Naive thymus-derived CD4-positive, alpha-beta T cell (primary cell): ENCODE measurements at regions of chr2 and their contacts with region 1.

Region 1: DNA sequence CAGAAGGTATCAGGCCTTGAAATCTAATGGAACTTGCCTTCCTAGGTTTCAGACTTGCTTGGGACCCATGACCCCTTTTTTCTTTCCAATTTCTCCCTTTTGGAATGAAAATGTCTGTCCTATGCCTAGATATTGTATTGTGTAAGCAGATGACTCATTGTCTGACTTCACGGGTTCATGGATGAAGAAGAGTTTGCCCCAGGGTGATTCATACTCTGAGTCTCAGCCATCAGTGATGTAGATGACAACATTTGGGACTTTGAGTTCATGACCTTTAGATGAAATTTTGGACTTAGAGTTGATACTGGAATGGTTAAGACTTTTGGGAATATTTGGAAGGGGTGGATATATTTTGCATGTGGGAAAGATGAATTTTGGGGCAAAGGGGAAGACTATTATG is 11.2 kb upstream of the SCYGR5 start:
- DNase-seq: no peak
- ATAC-seq: no peak
- H3K4me3 ChIP-seq: no peak overlapping the region
- H3K4me3 Mint-ChIP-seq: no peak overlapping the region
- H3K27ac ChIP-seq: no peak overlapping the region
- H3K27ac Mint-ChIP-seq: no peak overlapping the region
- H3K4me1 ChIP-seq: no peaks in the 10 kb centered on the region
- H3K4me1 Mint-ChIP-seq: no peaks in the 10 kb centered on the region
- H3K27me3 ChIP-seq: no peaks in the 10 kb centered on the region
- H3K27me3 Mint-ChIP-seq: peaks cover 0 to 12% (median 4%) of the 10 kb centered on the region in 5 donors

Region 2: GRCh38 chr2:227479865-227480475 is 175.5 kb before region 1 on chr2:
- CTCF ChIA-PET with region 1: no interaction called
- POLR2A ChIA-PET with region 1: no interaction called
- intact Hi-C with region 1: loop called in 1 of 2 experiments (anchors 5 kb)
- DNase-seq: peak in 2 of 9 donors; percentile 12 to 14
- ATAC-seq: peak; percentile 71
- H3K4me3 ChIP-seq: no peak overlapping the region
- H3K4me3 Mint-ChIP-seq: peak overlapping the region in 8 of 10 donors; percentile 7 to 59 (median 32)
- H3K27ac ChIP-seq: peak overlapping the region; percentile 2
- H3K27ac Mint-ChIP-seq: peak overlapping the region; percentile 0 to 85 (median 26)
- H3K4me1 ChIP-seq: peaks cover 28 to 31% of the 10 kb centered on the region in 2 donors
- H3K4me1 Mint-ChIP-seq: peaks cover 44 to 98% (median 68%) of the 10 kb centered on the region in 7 donors
- H3K27me3 ChIP-seq: no peaks in the 10 kb centered on the region
- H3K27me3 Mint-ChIP-seq: no peaks in the 10 kb centered on the region

Region 3: GRCh38 chr2:227862227-227862740 is 206.8 kb after region 1 on chr2:
- CTCF ChIA-PET with region 1: interaction called, 7 read pairs
- POLR2A ChIA-PET with region 1: no interaction called
- intact Hi-C with region 1: loop called (anchors 1 to 2 kb)
- DNase-seq: no peak
- ATAC-seq: peak; percentile 48
- H3K4me3 ChIP-seq: no peak overlapping the region
- H3K4me3 Mint-ChIP-seq: no peak overlapping the region
- H3K27ac ChIP-seq: no peak overlapping the region
- H3K27ac Mint-ChIP-seq: no peak overlapping the region
- H3K4me1 ChIP-seq: no peaks in the 10 kb centered on the region
- H3K4me1 Mint-ChIP-seq: no peaks in the 10 kb centered on the region
- H3K27me3 ChIP-seq: no peaks in the 10 kb centered on the region
- H3K27me3 Mint-ChIP-seq: peaks cover 0 to 17% (median 4%) of the 10 kb centered on the region in 5 donors

Region 4: DNA sequence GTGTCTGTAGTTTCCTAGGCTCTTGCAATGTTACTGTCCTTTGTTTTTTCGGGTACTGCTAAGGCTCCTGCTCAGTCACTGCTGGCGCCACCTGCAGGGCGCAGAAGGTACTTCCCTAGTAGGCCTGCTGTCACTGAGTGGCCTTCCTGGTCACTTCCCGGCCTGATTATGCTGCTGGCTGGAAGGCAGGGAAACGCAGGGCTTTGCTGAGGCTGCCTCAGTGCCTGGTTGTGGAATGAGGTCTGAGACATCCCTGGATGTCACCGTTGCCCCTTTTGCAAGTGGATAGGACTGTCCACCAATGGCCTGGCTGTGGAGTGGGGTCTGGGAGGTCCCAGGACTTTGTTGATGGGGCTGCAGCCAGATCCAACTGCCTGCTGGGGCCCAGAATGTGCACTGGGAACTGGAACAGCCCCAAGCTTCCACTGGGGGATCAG is 229.1 kb after region 1 on chr2:
- CTCF ChIA-PET with region 1: no interaction called
- POLR2A ChIA-PET with region 1: no interaction called
- intact Hi-C with region 1: loop called in 1 of 2 experiments (anchors 1 kb)
- DNase-seq: peak in 5 of 9 donors; percentile 12 to 62 (median 16)
- ATAC-seq: peak; percentile 74
- H3K4me3 ChIP-seq: no peak overlapping the region
- H3K4me3 Mint-ChIP-seq: no peak overlapping the region
- H3K27ac ChIP-seq: no peak overlapping the region
- H3K27ac Mint-ChIP-seq: no peak overlapping the region
- H3K4me1 ChIP-seq: no peaks in the 10 kb centered on the region
- H3K4me1 Mint-ChIP-seq: peaks cover 0 to 7% (median 0%) of the 10 kb centered on the region in 7 donors
- H3K27me3 ChIP-seq: no peaks in the 10 kb centered on the region
- H3K27me3 Mint-ChIP-seq: peaks cover 0 to 17% (median 6%) of the 10 kb centered on the region in 5 donors

Region 5: DNA sequence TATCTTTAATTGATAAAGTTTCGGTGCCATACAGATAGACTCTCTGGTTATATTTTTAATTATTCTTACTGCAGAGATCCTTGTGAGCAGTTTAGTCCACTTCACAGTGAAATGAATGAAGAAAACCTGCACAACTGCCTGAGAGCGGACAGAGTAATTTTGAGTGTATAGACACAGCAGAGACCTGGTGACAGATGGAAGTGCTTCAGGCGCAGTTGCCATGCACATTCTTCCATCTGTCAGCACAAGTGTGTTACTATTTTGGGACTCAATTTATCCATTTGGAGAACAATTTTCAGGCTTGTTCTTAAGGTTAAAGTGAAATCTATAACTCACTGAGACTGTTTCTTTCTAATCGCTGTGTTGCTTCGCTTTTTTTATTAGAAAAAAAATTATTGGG is 673.8 kb after region 1 on chr2:
- CTCF ChIA-PET with region 1: no interaction called
- POLR2A ChIA-PET with region 1: no interaction called
- intact Hi-C with region 1: no loop called
- DNase-seq: no peak
- ATAC-seq: no peak
- H3K4me3 ChIP-seq: no peak overlapping the region
- H3K4me3 Mint-ChIP-seq: no peak overlapping the region
- H3K27ac ChIP-seq: no peak overlapping the region
- H3K27ac Mint-ChIP-seq: no peak overlapping the region
- H3K4me1 ChIP-seq: no peaks in the 10 kb centered on the region
- H3K4me1 Mint-ChIP-seq: no peaks in the 10 kb centered on the region
- H3K27me3 ChIP-seq: no peaks in the 10 kb centered on the region
- H3K27me3 Mint-ChIP-seq: no peaks in the 10 kb centered on the region